Colonic mucosa (tissue), 4 donors: ENCODE measurements at regions of chr10 and their contacts with region 1.

Region 1: GRCh38 chr10:74419958-74420375 is 268.9 kb downstream of the ADK start:
- DNase-seq: peak; percentile 24
- H3K4me3 ChIP-seq: no peak overlapping the region
- H3K27ac ChIP-seq: no peak overlapping the region
- H3K4me1 ChIP-seq: no peaks in the 10 kb centered on the region
- H3K27me3 ChIP-seq: no peaks in the 10 kb centered on the region
- CTCF ChIP-seq: peak; percentile 32

Region 2: GRCh38 chr10:73079779-73080541 is 1340.0 kb before region 1 on chr10:
- intact Hi-C with region 1: no loop called
- DNase-seq: no peak
- H3K4me3 ChIP-seq: no peak overlapping the region
- H3K27ac ChIP-seq: no peak overlapping the region
- H3K4me1 ChIP-seq: peaks cover 3% of the 10 kb centered on the region
- H3K27me3 ChIP-seq: no peaks in the 10 kb centered on the region
- CTCF ChIP-seq: no peak

Region 3: GRCh38 chr10:74460812-74461211 is 40.8 kb after region 1 on chr10:
- intact Hi-C with region 1: no loop called
- DNase-seq: no peak
- H3K4me3 ChIP-seq: no peak overlapping the region
- H3K27ac ChIP-seq: no peak overlapping the region
- H3K4me1 ChIP-seq: no peaks in the 10 kb centered on the region
- H3K27me3 ChIP-seq: no peaks in the 10 kb centered on the region
- CTCF ChIP-seq: no peak

Region 4: GRCh38 chr10:74718208-74718607 is 298.2 kb after region 1 on chr10:
- intact Hi-C with region 1: no loop called
- DNase-seq: no peak
- H3K4me3 ChIP-seq: no peak overlapping the region
- H3K27ac ChIP-seq: no peak overlapping the region
- H3K4me1 ChIP-seq: no peaks in the 10 kb centered on the region
- H3K27me3 ChIP-seq: no peaks in the 10 kb centered on the region
- CTCF ChIP-seq: no peak

Region 5: DNA sequence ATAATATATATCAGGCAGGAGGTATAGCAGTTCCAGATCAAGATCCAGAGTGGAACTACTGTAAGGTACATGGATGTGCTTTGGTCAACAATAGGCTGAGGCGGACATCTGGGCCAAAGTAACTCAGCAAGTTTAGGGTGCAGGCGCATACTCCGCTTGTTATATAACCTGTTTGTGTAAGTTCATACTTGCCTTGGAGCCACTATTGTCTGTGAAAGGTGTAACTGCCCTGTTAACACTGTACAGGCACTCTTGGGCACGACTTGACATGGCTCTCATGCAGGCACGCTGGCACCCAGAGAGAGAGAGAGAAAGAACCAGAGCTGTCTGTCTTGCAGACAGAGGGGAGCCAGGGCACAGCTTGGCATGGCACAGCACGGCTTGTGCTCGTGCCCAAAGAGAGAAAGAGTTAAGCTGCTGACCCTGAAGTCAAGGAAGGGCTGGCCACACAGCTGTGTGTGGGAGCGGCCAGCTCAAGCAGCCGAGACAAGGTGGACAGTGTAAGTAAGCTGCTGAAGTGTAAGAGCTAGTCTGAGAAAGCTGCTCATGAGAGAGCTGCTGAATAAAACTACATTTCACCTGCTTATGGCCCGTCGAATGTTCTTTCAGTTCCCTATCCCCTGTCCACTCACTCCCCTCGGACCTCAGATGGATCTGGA is 358.6 kb after region 1 on chr10:
- intact Hi-C with region 1: no loop called
- DNase-seq: no peak
- H3K4me3 ChIP-seq: no peak overlapping the region
- H3K27ac ChIP-seq: no peak overlapping the region
- H3K4me1 ChIP-seq: no peaks in the 10 kb centered on the region
- H3K27me3 ChIP-seq: no peaks in the 10 kb centered on the region
- CTCF ChIP-seq: no peak

Region 6: GRCh38 chr10:75029857-75030256 is 609.9 kb after region 1 on chr10:
- intact Hi-C with region 1: loop called (anchors 10 kb)
- DNase-seq: no peak
- H3K4me3 ChIP-seq: no peak overlapping the region
- H3K27ac ChIP-seq: no peak overlapping the region
- H3K4me1 ChIP-seq: no peaks in the 10 kb centered on the region
- H3K27me3 ChIP-seq: no peaks in the 10 kb centered on the region
- CTCF ChIP-seq: no peak